H1 (cell line): ENCODE measurements at regions of chr11 and their contacts with region 1.

Region 1: DNA sequence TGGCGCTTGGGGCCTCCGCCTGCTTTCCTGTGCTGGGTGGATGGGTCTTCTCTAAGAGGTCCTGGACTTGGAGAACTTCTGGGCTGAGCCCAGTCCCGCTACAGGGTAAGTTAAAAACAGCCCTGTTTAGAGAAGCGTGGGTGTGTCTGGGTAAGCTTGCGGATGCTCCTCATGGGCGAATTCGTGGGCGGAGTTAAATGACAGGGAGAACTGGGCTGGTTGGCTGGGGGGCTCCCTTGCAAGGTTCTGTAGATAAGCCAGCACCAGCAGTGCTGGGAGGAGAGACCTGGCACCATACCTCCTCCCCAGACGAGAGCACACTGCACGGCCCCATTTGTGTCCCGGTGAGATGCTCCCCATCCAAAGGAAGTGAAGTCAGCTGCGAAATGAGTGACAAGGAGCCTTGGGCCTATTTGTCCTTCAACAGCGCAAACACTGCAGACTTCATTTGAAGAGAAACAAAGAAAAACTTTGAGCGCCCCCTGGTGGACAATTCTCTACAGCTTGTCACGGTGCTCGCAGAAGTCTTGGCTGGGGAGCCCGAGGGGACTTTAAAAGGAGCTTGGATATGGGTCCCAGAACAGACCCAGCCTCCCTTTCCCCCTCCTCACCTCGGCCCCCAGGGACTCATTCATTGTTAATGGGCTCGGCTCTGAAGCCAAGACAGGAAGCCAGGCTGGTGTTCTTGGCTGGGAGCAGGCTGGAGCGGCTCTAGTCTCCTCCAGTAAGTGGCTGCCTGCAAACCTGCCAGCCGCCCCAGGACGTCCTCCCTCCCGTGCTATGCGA is 39.5 kb downstream of the TP53I11 start:
- DNase-seq: peak; percentile 82 to 95
- H3K4me3 ChIP-seq: peak overlapping the region in 2 of 4 experiments; percentile 10 to 47; a peak in 3 of 8 replicates
- H3K27ac ChIP-seq: no peak overlapping the region
- H3K4me1 ChIP-seq: peaks cover 0 to 29% (median 6%) of the 10 kb centered on the region in 4 experiments; a peak in 6 of 7 replicates
- H3K27me3 ChIP-seq: no peaks in the 10 kb centered on the region; a peak in 2 of 7 replicates
- CTCF ChIP-seq: peak; percentile 52 to 79 (median 67)
- EP300 ChIP-seq: 0 out of 3 replicates have a peak, but pooled peaks of 1 of the 2 experiments have one; percentile 7
- POLR2A ChIP-seq: no peak
- RAD21 ChIP-seq: peak; percentile 74 to 82

Region 2: DNA sequence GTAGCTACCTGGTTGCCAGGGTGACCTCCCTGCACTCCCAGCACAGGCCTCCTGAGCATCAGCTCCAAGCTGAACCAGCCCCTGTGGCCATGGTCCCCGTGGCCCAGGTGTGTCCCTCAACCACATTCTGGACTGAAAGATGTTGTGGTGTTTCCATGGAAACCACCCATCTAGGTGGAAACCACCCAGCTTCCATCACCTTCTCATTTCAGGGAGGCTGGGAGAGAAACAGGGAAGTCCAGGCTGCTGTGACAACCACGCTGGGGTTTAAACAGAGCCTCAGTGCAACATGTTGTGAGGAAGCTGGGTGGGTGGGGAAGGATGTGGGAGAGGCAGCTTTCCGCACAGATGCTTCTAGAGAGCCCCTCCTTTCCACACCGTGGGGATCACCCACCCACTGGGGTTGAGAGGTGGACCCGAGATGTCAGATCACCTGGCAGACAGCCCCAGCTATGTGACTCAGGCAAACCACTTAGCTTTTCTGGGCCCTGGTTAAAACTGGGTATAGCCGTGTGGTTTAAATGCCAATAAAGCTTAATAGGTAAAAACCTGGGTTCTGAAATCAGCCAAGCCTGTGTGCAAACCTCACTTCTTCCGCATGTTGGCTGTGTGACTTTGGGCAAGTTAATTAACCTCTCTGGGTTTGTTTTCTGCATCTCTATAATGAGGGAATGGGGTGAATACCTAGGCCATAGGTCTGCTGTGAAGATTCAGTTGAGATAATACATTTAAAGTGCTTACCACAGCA is 299.4 kb before region 1 on chr11:
- CTCF ChIA-PET with region 1: interaction called, 16 read pairs
- POLR2A ChIA-PET with region 1: no interaction called
- DNase-seq: no peak
- H3K4me3 ChIP-seq: no peak overlapping the region
- H3K27ac ChIP-seq: no peak overlapping the region
- H3K4me1 ChIP-seq: peaks cover 0 to 9% (median 1%) of the 10 kb centered on the region in 4 experiments; a peak in 3 of 7 replicates
- H3K27me3 ChIP-seq: no peaks in the 10 kb centered on the region
- CTCF ChIP-seq: no peak
- EP300 ChIP-seq: no peak
- POLR2A ChIP-seq: no peak
- RAD21 ChIP-seq: no peak

Region 3: DNA sequence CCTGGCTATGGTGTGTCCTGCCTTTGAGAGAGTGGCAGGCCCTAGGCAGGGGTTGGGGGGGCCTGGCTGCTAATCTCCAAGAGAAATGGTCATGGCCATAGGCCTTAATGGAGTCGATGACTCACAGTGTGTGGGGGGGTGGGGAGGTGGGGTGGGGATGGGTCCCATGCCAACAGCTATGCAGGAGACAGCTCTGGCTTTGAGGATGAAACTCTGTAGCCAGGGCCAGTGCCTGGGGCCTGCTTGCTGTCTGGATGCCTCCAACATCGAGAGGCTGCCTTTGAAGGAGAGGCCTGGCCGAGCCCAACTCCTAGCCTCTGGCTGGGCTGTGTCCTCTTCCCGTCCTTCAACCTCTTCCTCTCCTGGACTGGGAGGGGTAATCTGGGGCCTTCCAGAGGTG is 208.3 kb before region 1 on chr11:
- CTCF ChIA-PET with region 1: no interaction called
- POLR2A ChIA-PET with region 1: no interaction called
- DNase-seq: no peak
- H3K4me3 ChIP-seq: no peak overlapping the region
- H3K27ac ChIP-seq: no peak overlapping the region
- H3K4me1 ChIP-seq: no peaks in the 10 kb centered on the region; a peak in 2 of 7 replicates
- H3K27me3 ChIP-seq: no peaks in the 10 kb centered on the region; a peak in 1 of 7 replicates
- CTCF ChIP-seq: no peak
- EP300 ChIP-seq: no peak
- POLR2A ChIP-seq: no peak
- RAD21 ChIP-seq: no peak

Region 4: GRCh38 chr11:44727373-44728287 is 183.6 kb before region 1 on chr11:
- CTCF ChIA-PET with region 1: interaction called, 10 read pairs
- POLR2A ChIA-PET with region 1: no interaction called
- DNase-seq: peak in 1 of 2 experiments; percentile 93
- H3K4me3 ChIP-seq: peak overlapping the region; percentile 14 to 73 (median 50)
- H3K27ac ChIP-seq: no peak overlapping the region
- H3K4me1 ChIP-seq: peaks cover 24 to 41% (median 26%) of the 10 kb centered on the region in 4 experiments
- H3K27me3 ChIP-seq: peaks cover 26 to 66% (median 57%) of the 10 kb centered on the region in 4 experiments
- CTCF ChIP-seq: peak; percentile 81 to 94 (median 89)
- EP300 ChIP-seq: no peak
- POLR2A ChIP-seq: no peak
- RAD21 ChIP-seq: peak; percentile 80 to 85

Region 5: GRCh38 chr11:44886790-44887140 is 24.5 kb before region 1 on chr11:
- CTCF ChIA-PET with region 1: interaction called, 10 read pairs
- POLR2A ChIA-PET with region 1: no interaction called
- DNase-seq: no peak
- H3K4me3 ChIP-seq: no peak overlapping the region
- H3K27ac ChIP-seq: no peak overlapping the region
- H3K4me1 ChIP-seq: peaks cover 14 to 31% (median 21%) of the 10 kb centered on the region in 4 experiments
- H3K27me3 ChIP-seq: peaks cover 0 to under 1% (median under 1%) of the 10 kb centered on the region in 4 experiments; a peak in 3 of 7 replicates
- CTCF ChIP-seq: no peak
- EP300 ChIP-seq: no peak
- POLR2A ChIP-seq: no peak
- RAD21 ChIP-seq: no peak

Region 6: GRCh38 chr11:44899959-44900358 is 11.3 kb before region 1 on chr11:
- CTCF ChIA-PET with region 1: interaction called, 24 read pairs
- POLR2A ChIA-PET with region 1: no interaction called
- DNase-seq: peak in 1 of 2 experiments; percentile 73
- H3K4me3 ChIP-seq: no peak overlapping the region
- H3K27ac ChIP-seq: no peak overlapping the region
- H3K4me1 ChIP-seq: peaks cover 0 to 4% (median 0%) of the 10 kb centered on the region in 4 experiments; a peak in 4 of 7 replicates
- H3K27me3 ChIP-seq: 0 out of 7 replicates have a peak, but pooled peaks cover 0 to 3% (median 0%) of the 10 kb centered on the region in 4 experiments
- CTCF ChIP-seq: no peak
- EP300 ChIP-seq: no peak
- POLR2A ChIP-seq: no peak
- RAD21 ChIP-seq: no peak; a peak in 1 of 4 replicates

Region 7: DNA sequence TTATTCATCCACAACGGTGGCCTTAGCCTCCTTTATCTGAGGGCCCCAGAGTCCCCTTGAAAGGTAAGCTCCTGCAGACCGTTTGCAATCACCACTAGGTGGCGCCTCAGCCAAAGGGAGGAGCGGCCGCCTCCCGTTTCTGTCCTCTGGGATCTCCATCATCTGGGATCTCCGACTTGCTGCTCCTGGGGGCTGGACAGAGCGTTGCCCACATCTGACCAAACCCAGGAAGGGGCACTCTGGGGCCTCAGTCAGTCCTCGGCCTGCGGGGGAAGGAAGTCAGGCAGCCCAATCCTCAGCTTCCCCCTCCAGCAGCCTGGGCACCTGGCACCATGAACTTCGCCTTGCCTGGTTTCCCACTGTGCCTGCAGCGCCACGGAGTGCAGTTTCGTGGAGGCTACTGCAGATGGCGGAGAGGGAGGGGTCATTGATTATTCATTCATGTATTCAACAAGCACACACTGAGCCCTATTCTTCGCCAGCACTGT is 16.0 kb after region 1 on chr11:
- CTCF ChIA-PET with region 1: interaction called, 63 read pairs
- POLR2A ChIA-PET with region 1: interaction called, 3 read pairs
- DNase-seq: peak; percentile 70 to 91
- H3K4me3 ChIP-seq: peak overlapping the region in 1 of 4 experiments; percentile 20; a peak in 1 of 8 replicates
- H3K27ac ChIP-seq: no peak overlapping the region
- H3K4me1 ChIP-seq: peaks cover 0 to 18% (median 13%) of the 10 kb centered on the region in 4 experiments; a peak in 6 of 7 replicates
- H3K27me3 ChIP-seq: no peaks in the 10 kb centered on the region
- CTCF ChIP-seq: peak; percentile 84 to 95 (median 93)
- EP300 ChIP-seq: no peak
- POLR2A ChIP-seq: no peak
- RAD21 ChIP-seq: peak; percentile 86 to 93